Thyroid gland (tissue), 4 donors: ENCODE measurements at regions of chr19 and their contacts with region 1.

Region 1: GRCh38 chr19:34772697-34773554 is at the start of gene ZNF599:
- DNase-seq: peak; percentile 90 to 91
- H3K4me3 ChIP-seq: peak within 1 kb of the TSS; percentile 49 to 88 (median 55)
- H3K27ac ChIP-seq: peak within 1 kb of the TSS in 2 of 3 donors; percentile 44 to 54
- H3K4me1 ChIP-seq: peaks cover 9 to 13% of the 10 kb centered on the region in 2 donors
- H3K27me3 ChIP-seq: no peaks in the 10 kb centered on the region
- CTCF ChIP-seq: peak in 1 of 6 experiments; percentile 9
- POLR2A ChIP-seq: peak in 1 of 2 donors; percentile 71
- total RNA-seq, gene ZNF599: 14.3 to 22.5 (median 17.2) TPM

Region 2: GRCh38 chr19:34734601-34735108 is 38.3 kb before region 1 on chr19:
- intact Hi-C with region 1: loop called (anchors 5 kb)
- DNase-seq: no peak
- H3K4me3 ChIP-seq: peak overlapping the region; percentile 62 to 75 (median 66)
- H3K27ac ChIP-seq: peak overlapping the region; percentile 92 to 99 (median 96)
- H3K4me1 ChIP-seq: peaks cover 15 to 19% of the 10 kb centered on the region in 2 donors
- H3K27me3 ChIP-seq: no peaks in the 10 kb centered on the region
- CTCF ChIP-seq: no peak
- POLR2A ChIP-seq: no peak